Heart right ventricle (tissue), 16 donors: ENCODE measurements at regions of chr1 and their contacts with region 1.

Region 1: GRCh38 chr1:222829868-222830267 is 15.0 kb downstream of the DISP1 start:
- DNase-seq: no peak
- ATAC-seq: peak in 3 of 8 donors; percentile 42 to 84 (median 69)
- H3K4me3 ChIP-seq: no peak overlapping the region
- H3K27ac ChIP-seq: peak overlapping the region in 1 of 10 donors; percentile 57
- H3K4me1 ChIP-seq: peaks cover 0 to 14% (median 0%) of the 10 kb centered on the region in 9 donors
- H3K27me3 ChIP-seq: no peaks in the 10 kb centered on the region
- CTCF ChIP-seq: no peak

Region 2: GRCh38 chr1:222880586-222880985 is 50.7 kb after region 1 on chr1:
- intact Hi-C with region 1: loop called in 1 of 10 experiments (anchors 10 kb)
- DNase-seq: no peak
- ATAC-seq: no peak
- H3K4me3 ChIP-seq: no peak overlapping the region
- H3K27ac ChIP-seq: no peak overlapping the region
- H3K4me1 ChIP-seq: peaks cover 0 to 10% (median 0%) of the 10 kb centered on the region in 9 donors
- H3K27me3 ChIP-seq: no peaks in the 10 kb centered on the region
- CTCF ChIP-seq: no peak

Region 3: DNA sequence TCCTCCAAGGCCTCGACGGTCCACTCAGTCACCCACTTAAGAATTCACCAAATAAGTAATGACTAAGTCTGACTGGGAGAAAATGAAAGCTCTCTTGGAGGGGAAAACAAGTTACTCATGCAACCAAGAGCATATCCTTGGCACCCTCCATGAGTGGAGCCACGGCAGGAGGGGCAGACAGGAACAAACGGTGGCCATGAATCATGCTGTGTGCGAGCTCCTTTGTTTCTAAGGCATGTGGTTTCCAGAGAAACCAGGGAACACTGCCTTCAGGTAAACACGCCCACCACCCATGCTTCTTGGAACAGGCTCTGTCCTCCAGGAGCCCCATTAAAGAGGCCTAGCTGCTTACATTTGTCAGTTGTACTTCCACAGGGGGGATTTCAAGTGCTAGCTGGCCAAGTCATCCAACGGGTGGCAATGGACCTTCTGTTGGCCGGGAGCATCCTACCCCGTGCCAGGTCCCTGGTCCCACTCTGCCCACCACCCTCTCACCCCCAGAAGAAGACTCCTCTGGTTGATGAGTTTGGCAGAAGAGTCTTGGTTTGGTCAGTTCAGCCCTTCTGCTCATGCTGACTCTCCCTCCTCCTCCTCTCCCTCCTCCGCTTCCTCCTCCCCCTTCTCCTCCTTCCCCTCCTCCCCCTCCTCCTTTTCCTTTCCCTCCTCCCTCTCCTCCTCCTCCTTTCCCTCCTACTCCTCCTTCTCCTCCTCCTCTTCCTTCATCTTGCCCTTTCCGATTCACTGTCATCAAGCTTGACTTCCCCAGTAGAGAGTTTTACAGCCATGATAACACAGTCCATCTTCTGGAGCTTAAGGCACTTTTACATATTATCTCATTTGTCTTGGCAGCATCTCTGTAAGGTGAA is 670.9 kb after region 1 on chr1:
- intact Hi-C with region 1: no loop called
- DNase-seq: no peak
- ATAC-seq: no peak
- H3K4me3 ChIP-seq: no peak overlapping the region
- H3K27ac ChIP-seq: no peak overlapping the region
- H3K4me1 ChIP-seq: peaks cover 0 to 3% (median 0%) of the 10 kb centered on the region in 9 donors
- H3K27me3 ChIP-seq: no peaks in the 10 kb centered on the region
- CTCF ChIP-seq: no peak

Region 4: GRCh38 chr1:223556414-223557129 is 726.7 kb after region 1 on chr1:
- intact Hi-C with region 1: no loop called
- DNase-seq: peak in 1 of 2 donors; percentile 24
- ATAC-seq: no peak
- H3K4me3 ChIP-seq: no peak overlapping the region
- H3K27ac ChIP-seq: no peak overlapping the region
- H3K4me1 ChIP-seq: no peaks in the 10 kb centered on the region
- H3K27me3 ChIP-seq: no peaks in the 10 kb centered on the region
- CTCF ChIP-seq: peak in 5 of 9 donors; percentile 13 to 61 (median 24)